PC-3 (cell line): ENCODE measurements at regions of chr12 and their contacts with region 1.

Region 1: DNA sequence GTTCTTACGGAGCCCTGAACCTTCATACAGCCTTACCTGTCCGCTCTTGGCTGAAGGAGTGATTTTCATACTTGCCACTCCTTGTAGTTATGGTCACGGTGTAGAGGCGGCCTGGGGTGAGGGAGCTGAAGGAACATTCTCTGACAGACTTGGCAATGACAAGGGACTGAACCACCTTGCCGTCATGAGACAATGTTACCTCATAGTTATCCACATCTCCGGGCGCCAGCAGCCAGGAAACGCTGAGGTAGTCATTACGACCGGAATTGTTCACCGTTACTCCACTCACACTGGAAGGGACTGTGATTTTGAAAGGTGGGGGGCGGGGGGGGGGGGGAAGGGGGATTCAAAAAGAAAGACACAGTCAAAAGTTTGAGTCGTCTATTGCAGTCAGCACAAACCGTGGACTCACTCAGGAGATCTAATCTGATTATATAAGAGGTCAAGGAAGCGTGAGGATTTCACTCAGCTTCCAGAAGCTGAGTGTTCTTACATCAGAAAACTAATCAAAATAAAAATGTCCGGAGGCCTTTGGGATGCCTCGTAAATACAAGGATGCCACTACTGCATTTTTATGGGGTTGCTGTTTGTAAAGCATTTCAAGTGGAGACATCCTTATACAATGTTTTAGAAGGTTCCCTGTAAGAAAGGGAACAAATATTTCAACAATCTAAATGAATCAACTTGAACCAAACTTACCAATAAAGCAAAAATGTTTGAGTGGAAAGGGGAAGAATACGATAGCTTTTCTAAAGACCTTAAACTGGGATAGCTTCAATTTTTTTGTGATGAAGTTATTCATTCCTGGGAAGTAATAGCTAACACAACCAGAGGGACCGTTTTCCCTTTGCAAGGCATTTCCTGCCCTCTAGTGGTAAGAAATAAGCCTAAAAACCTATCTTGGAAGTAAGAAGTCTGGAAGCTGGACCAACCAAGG is 60.6 kb downstream of the PTPRB start:
- DNase-seq: peak; percentile 88
- ATAC-seq: peak; percentile 87
- H3K4me3 ChIP-seq: no peak overlapping the region
- H3K27ac ChIP-seq: no peak overlapping the region
- H3K4me1 ChIP-seq: no peaks in the 10 kb centered on the region
- H3K27me3 ChIP-seq: no peaks in the 10 kb centered on the region
- CTCF ChIP-seq: peak; percentile 95

Region 2: DNA sequence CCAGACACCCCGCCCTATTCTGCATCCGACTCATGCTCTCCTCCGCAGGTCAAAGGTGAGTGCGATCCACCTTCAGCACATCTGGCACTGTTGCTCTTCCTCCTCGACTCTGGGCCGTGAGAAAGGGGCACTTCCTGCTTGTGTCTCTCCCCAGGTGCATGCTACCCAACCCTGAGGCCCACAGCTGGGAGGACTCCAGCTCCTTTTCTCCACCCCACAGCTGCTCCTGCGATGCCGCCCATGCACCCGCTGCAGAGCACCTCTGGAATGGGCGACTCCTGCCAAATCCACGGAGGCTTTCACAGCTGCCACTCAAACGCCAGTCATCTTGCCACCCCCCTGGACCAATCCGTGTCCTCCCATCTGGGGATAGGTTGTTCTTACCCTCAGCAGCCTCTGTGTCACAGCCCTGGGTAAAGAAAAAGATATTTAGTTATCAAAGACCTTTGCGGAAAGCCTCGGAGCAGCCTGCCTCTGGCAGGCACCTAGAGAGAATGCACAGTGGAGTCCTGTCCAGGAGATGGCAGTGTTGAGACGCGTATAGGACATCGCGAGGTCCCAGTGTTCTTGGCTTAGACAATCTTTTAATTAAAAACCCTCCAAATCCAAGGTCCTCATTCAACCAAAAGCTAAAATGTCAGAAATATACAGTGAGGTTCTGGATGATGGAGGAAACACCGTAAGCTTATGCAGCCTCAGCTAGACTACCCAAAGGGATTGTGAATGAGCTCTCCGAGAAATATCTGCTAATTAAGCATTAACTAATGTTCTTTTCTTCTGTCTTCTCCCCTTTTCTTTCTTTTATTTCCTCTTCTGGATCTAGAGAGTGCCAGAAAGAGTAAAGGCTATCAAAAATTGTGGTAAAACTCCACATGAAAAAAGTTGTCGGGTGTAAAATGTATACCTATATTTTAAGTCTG is 697.3 kb before region 1 on chr12:
- CTCF ChIA-PET with region 1: interaction called, 12 read pairs
- POLR2A ChIA-PET with region 1: no interaction called
- intact Hi-C with region 1: loop called (anchors 1 kb)
- DNase-seq: peak; percentile 88
- ATAC-seq: peak; percentile 95
- H3K4me3 ChIP-seq: peak overlapping the region; percentile 66
- H3K27ac ChIP-seq: no peak overlapping the region
- H3K4me1 ChIP-seq: no peaks in the 10 kb centered on the region; the same call in 1 of the 2 replicates
- H3K27me3 ChIP-seq: no peaks in the 10 kb centered on the region
- CTCF ChIP-seq: peak; percentile 97

Region 3: GRCh38 chr12:69900720-69901131 is 675.9 kb before region 1 on chr12:
- CTCF ChIA-PET with region 1: interaction called, 9 read pairs
- POLR2A ChIA-PET with region 1: no interaction called
- intact Hi-C with region 1: loop called (anchors 1 kb)
- DNase-seq: peak; percentile 86
- ATAC-seq: peak; percentile 69
- H3K4me3 ChIP-seq: no peak overlapping the region
- H3K27ac ChIP-seq: no peak overlapping the region
- H3K4me1 ChIP-seq: no peaks in the 10 kb centered on the region
- H3K27me3 ChIP-seq: no peaks in the 10 kb centered on the region
- CTCF ChIP-seq: peak; percentile 92

Region 4: DNA sequence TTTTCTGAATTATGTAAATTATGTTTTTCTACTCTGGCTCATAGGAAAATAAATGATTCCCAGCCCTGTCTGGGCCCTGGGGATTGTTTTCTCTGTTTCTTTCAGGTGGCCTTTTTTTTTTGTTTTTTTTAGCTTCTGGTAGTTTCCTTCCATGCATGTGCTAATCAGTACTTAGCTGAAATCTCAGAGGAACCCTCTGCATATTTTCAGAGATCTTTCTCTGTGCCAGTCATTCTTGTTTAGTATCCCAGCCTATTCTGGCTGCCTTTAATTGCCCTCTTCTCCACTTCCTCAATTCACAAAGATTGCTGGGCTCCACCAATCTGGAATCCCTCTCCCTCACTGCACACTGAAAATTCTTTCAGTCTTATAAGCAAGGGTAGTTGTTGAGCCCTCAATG is 286.5 kb before region 1 on chr12:
- CTCF ChIA-PET with region 1: no interaction called
- POLR2A ChIA-PET with region 1: no interaction called
- intact Hi-C with region 1: no loop called
- DNase-seq: no peak
- ATAC-seq: no peak
- H3K4me3 ChIP-seq: no peak overlapping the region
- H3K27ac ChIP-seq: no peak overlapping the region
- H3K4me1 ChIP-seq: no peaks in the 10 kb centered on the region
- H3K27me3 ChIP-seq: no peaks in the 10 kb centered on the region
- CTCF ChIP-seq: no peak

Region 5: DNA sequence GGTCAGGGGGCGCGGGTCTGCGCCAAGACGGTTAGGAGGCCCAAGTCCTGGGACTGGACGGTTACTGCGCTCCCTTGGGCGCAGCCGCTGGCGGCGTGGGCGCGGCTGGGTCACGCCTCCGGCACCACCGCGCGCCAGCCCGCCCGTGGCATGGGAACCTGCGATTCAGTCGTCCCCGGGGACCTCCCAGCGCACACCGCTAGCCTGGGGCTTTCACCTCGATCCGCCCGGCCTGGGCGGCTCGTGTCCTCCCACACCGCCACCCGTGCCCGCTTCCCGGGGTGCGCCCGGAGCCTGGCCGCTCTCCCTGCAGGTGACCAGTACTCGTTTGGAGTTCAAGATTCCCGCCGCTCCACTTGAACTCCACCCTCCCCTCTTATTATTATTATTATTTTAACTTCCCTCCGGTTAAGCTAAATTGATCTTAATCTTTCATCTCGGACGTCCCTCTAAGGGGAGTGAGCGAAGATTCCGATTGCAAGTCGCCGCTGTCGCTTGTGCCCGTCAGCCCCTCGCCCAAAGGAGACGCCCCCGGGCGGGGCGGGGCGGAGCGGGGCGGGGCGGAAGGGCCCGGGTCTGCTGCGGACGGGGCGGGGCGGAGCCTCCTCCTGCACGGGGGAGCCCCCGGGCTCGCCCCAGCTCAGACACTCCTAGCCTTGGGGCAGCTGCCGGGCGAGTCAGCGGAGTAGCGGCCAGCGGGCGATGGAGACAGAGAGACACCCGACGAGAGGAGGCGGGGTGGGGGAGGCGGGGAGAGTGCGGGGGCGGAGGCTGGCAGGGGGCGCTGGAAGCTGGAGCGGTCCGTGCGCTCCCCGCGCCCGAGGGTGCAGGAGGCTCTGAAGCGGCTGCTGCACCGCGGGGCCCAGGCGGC is 210.7 kb before region 1 on chr12 and contains the start of gene KCNMB4:
- CTCF ChIA-PET with region 1: interaction called, 4 read pairs
- POLR2A ChIA-PET with region 1: no interaction called
- intact Hi-C with region 1: loop called (anchors 5 kb)
- DNase-seq: peak; percentile 74
- ATAC-seq: peak; percentile 76
- H3K4me3 ChIP-seq: peak within 1 kb of the TSS; percentile 79
- H3K27ac ChIP-seq: no peak within 1 kb of the TSS
- H3K4me1 ChIP-seq: peaks cover 20% of the 10 kb centered on the region
- H3K27me3 ChIP-seq: no peaks in the 10 kb centered on the region
- CTCF ChIP-seq: no peak
- total RNA-seq, gene KCNMB4: 2.6 and 3.0 TPM in 2 replicates

Region 6: GRCh38 chr12:70402600-70402999 is 174.0 kb before region 1 on chr12:
- CTCF ChIA-PET with region 1: interaction called, 18 read pairs
- POLR2A ChIA-PET with region 1: no interaction called
- intact Hi-C with region 1: loop called (anchors 1 kb)
- DNase-seq: peak; percentile 11
- ATAC-seq: no peak; the same call in 1 of the 2 replicates
- H3K4me3 ChIP-seq: no peak overlapping the region
- H3K27ac ChIP-seq: no peak overlapping the region
- H3K4me1 ChIP-seq: no peaks in the 10 kb centered on the region
- H3K27me3 ChIP-seq: no peaks in the 10 kb centered on the region
- CTCF ChIP-seq: no peak; the same call in 1 of the 2 replicates

Region 7: GRCh38 chr12:70520847-70521246 is 55.8 kb before region 1 on chr12:
- CTCF ChIA-PET with region 1: no interaction called
- POLR2A ChIA-PET with region 1: no interaction called
- intact Hi-C with region 1: no loop called
- DNase-seq: no peak
- ATAC-seq: no peak
- H3K4me3 ChIP-seq: no peak overlapping the region
- H3K27ac ChIP-seq: no peak overlapping the region
- H3K4me1 ChIP-seq: no peaks in the 10 kb centered on the region
- H3K27me3 ChIP-seq: no peaks in the 10 kb centered on the region
- CTCF ChIP-seq: no peak

Region 8: GRCh38 chr12:70543444-70543843 is 33.2 kb before region 1 on chr12:
- CTCF ChIA-PET with region 1: no interaction called
- POLR2A ChIA-PET with region 1: no interaction called
- intact Hi-C with region 1: no loop called
- DNase-seq: peak; percentile 93
- ATAC-seq: peak; percentile 98
- H3K4me3 ChIP-seq: no peak overlapping the region
- H3K27ac ChIP-seq: peak overlapping the region; percentile 23; the same call in 1 of the 2 replicates
- H3K4me1 ChIP-seq: peaks cover 16% of the 10 kb centered on the region
- H3K27me3 ChIP-seq: no peaks in the 10 kb centered on the region
- CTCF ChIP-seq: no peak

Region 9: GRCh38 chr12:70962226-70962794 is 385.7 kb after region 1 on chr12:
- CTCF ChIA-PET with region 1: no interaction called
- POLR2A ChIA-PET with region 1: no interaction called
- intact Hi-C with region 1: no loop called
- DNase-seq: no peak
- ATAC-seq: no peak
- H3K4me3 ChIP-seq: no peak overlapping the region
- H3K27ac ChIP-seq: no peak overlapping the region
- H3K4me1 ChIP-seq: no peaks in the 10 kb centered on the region
- H3K27me3 ChIP-seq: no peaks in the 10 kb centered on the region
- CTCF ChIP-seq: no peak